A673 (cell line): ENCODE measurements at regions of chr16 and their contacts with region 1.

Region 1: GRCh38 chr16:1097800-1098199 is 1.8 kb upstream of the C1QTNF8 start:
- DNase-seq: no peak
- H3K4me3 ChIP-seq: no peak overlapping the region
- H3K27ac ChIP-seq: no peak overlapping the region
- H3K4me1 ChIP-seq: no peaks in the 10 kb centered on the region
- H3K27me3 ChIP-seq: no peaks in the 10 kb centered on the region
- CTCF ChIP-seq: no peak

Region 2: GRCh38 chr16:813204-813915 is 284.4 kb before region 1 on chr16:
- CTCF ChIA-PET with region 1: no interaction called
- POLR2A ChIA-PET with region 1: no interaction called
- intact Hi-C with region 1: loop called (anchors 5 kb)
- DNase-seq: peak; percentile 49
- H3K4me3 ChIP-seq: peak overlapping the region; percentile 10
- H3K27ac ChIP-seq: no peak overlapping the region
- H3K4me1 ChIP-seq: no peaks in the 10 kb centered on the region
- H3K27me3 ChIP-seq: no peaks in the 10 kb centered on the region
- CTCF ChIP-seq: peak; percentile 72